Mammary epithelial cell (primary cell): ENCODE measurements at regions of chr5 and their contacts with region 1.

Region 1: GRCh38 chr5:22539762-22540161 is 313.4 kb downstream of the CDH12 start:
- DNase-seq: no peak
- H3K4me3 ChIP-seq: no peak overlapping the region
- H3K27ac ChIP-seq: no peak overlapping the region
- H3K4me1 ChIP-seq: no peaks in the 10 kb centered on the region
- H3K27me3 ChIP-seq: no peaks in the 10 kb centered on the region
- CTCF ChIP-seq: no peak

Region 2: GRCh38 chr5:22500556-22500955 is 39.2 kb before region 1 on chr5:
- CTCF ChIA-PET with region 1: no interaction called
- dilution Hi-C with region 1: no loop called
- in situ Hi-C with region 1: no loop called
- intact Hi-C with region 1: loop called (anchors 2 kb)
- DNase-seq: no peak
- H3K4me3 ChIP-seq: no peak overlapping the region
- H3K27ac ChIP-seq: no peak overlapping the region
- H3K4me1 ChIP-seq: peaks cover 12% of the 10 kb centered on the region
- H3K27me3 ChIP-seq: no peaks in the 10 kb centered on the region
- CTCF ChIP-seq: no peak

Region 3: DNA sequence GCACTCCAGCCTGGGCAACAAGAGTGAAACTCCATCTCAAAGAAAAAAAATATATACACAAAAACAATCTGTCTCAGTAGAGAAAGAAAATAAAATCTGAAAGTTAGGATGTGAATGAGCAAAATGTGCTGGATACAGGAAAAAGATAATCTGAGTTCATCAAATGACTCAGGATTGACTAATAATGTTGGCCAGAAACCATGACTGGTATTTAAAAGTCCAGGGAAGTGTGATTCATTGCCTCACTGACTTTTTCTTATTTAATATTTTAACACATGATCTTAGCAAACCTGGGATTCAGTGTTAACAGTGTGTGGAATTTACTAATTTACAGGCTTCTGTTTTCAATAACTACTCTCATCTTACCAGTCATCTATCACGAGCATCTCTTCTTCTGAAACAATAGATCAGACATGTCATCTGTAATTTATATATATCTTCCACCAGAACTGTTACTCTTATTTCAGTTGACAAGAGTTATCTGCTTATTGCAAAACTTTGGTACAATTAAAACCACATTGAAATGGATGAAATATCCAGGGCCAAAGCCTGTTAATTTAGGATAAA is 56.7 kb after region 1 on chr5:
- CTCF ChIA-PET with region 1: no interaction called
- dilution Hi-C with region 1: no loop called
- in situ Hi-C with region 1: no loop called
- intact Hi-C with region 1: no loop called
- DNase-seq: peak; percentile 87
- H3K4me3 ChIP-seq: no peak overlapping the region
- H3K27ac ChIP-seq: peak overlapping the region; percentile 48
- H3K4me1 ChIP-seq: peaks cover 7% of the 10 kb centered on the region
- H3K27me3 ChIP-seq: no peaks in the 10 kb centered on the region
- CTCF ChIP-seq: no peak

Region 4: DNA sequence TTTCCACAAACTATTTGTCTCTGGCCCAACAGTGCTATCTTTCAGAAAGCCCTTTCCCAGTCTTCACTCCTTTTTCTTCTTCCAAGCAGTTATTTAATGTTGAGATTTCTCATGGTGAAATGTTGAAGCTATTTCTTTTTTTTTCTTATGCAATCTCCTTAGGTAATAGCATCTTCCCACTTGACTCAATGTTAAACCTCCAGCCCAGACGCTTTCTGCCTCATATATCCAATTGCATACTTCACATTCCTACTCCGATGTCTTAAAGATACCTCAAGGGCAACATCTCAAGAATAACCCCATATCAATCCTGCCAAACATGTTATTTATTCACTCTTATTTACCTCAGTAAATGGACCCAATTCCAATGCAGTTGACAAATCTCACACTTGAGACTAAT is 126.0 kb after region 1 on chr5:
- CTCF ChIA-PET with region 1: no interaction called
- dilution Hi-C with region 1: no loop called
- in situ Hi-C with region 1: no loop called
- intact Hi-C with region 1: no loop called
- DNase-seq: no peak
- H3K4me3 ChIP-seq: no peak overlapping the region
- H3K27ac ChIP-seq: no peak overlapping the region
- H3K4me1 ChIP-seq: no peaks in the 10 kb centered on the region
- H3K27me3 ChIP-seq: no peaks in the 10 kb centered on the region
- CTCF ChIP-seq: no peak